ENCODE measurements at regions of chr14 and their contacts with region 1.

Region 1: DNA sequence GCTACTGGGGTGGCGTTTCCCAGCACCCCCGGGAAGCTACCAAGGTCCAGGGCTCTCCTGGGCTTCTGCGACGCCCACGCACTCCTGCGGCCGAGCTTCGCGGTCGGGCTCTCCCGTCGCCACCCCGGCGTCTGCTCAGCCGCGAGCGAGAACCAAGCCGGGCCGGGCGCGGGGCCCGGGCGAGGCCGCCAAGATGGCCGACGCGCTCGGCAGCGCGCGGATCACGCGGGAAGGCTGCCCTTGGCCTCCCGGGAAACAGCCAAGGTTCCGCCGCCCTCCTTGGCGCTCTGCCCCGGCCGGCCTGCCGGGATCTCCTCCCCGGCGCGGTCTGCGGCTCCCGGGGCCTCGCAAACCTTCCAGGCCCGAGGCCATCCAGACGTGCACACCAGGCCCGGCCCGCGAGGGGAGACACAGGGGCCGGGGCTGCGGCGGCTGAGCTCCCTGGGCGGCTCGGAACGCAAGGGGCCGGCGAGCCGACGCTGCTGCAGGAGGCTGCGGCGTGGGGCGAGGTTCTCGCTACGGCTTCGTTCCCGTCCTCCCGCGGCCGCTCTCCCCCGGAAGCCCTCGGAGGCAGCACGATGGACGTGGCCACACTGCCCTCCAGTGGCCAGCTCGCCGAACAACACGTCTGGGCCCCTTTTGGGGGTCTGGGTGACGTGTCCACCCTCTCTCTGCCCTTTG is 23.5 kb upstream of the ZFP36L1 start:
- DNase-seq: peak; percentile 96
- ATAC-seq: peak; percentile 74
- H3K4me3 Mint-ChIP-seq: peak overlapping the region; percentile 89
- H3K27ac Mint-ChIP-seq: peak overlapping the region; percentile 93
- H3K4me1 Mint-ChIP-seq: peaks cover 86% of the 10 kb centered on the region
- H3K27me3 Mint-ChIP-seq: no peaks in the 10 kb centered on the region
- CTCF ChIP-seq: peak; percentile 54

Region 2: GRCh38 chr14:68239988-68240771 is 576.2 kb before region 1 on chr14:
- CTCF ChIA-PET with region 1: interaction called, 15 read pairs
- POLR2A ChIA-PET with region 1: interaction called, 3 read pairs
- intact Hi-C with region 1: no loop called
- DNase-seq: no peak
- ATAC-seq: no peak
- H3K4me3 Mint-ChIP-seq: no peak overlapping the region
- H3K27ac Mint-ChIP-seq: no peak overlapping the region
- H3K4me1 Mint-ChIP-seq: peaks cover 8% of the 10 kb centered on the region
- H3K27me3 Mint-ChIP-seq: no peaks in the 10 kb centered on the region
- CTCF ChIP-seq: no peak

Region 3: DNA sequence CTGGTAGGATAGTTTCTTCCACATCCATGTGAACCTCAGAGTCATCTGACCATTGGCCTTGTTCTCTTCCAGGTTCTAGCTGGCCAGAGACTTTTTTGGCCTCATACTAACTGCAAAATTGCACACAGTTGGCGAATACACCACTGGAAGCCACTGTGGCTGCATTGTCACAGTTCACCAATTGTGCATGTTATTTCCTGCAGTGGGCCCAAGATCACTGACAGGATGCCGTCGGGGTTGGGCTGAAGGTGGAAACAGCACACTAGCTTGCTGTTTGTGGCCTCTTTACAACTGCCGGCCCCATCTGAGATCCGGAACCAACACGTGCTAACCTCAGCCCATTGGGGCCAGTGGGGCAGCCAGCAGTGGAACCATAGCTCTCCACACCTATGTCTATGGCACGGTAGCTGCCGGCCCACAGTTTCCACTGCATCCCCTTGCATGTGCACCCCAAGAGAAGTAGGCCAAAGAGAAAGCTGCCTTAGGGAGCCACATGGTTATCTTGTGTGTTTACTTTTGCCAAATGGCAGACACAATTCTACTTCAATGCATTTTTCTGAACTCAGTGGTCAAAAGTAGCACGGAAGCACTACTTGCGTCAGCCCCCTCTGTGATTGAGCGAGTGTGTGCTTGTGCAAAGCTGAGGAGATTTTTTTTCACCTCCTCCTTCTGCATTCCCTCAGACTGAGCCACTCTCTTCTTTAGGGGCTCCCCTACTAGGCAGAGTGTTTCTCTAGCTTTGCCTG is 532.9 kb before region 1 on chr14:
- CTCF ChIA-PET with region 1: interaction called, 8 read pairs
- POLR2A ChIA-PET with region 1: interaction called, 186 read pairs
- intact Hi-C with region 1: loop called (anchors 1 kb)
- DNase-seq: peak; percentile 61
- ATAC-seq: peak; percentile 60
- H3K4me3 Mint-ChIP-seq: peak overlapping the region; percentile 58
- H3K27ac Mint-ChIP-seq: peak overlapping the region; percentile 99
- H3K4me1 Mint-ChIP-seq: peaks cover 97% of the 10 kb centered on the region
- H3K27me3 Mint-ChIP-seq: no peaks in the 10 kb centered on the region
- CTCF ChIP-seq: no peak

Region 4: GRCh38 chr14:68401855-68402254 is 414.5 kb before region 1 on chr14:
- CTCF ChIA-PET with region 1: interaction called, 6 read pairs
- POLR2A ChIA-PET with region 1: interaction called, 139 read pairs
- intact Hi-C with region 1: loop called (anchors 1 kb)
- DNase-seq: no peak
- ATAC-seq: peak; percentile 59
- H3K4me3 Mint-ChIP-seq: peak overlapping the region; percentile 72
- H3K27ac Mint-ChIP-seq: peak overlapping the region; percentile 92
- H3K4me1 Mint-ChIP-seq: peaks cover 92% of the 10 kb centered on the region
- H3K27me3 Mint-ChIP-seq: no peaks in the 10 kb centered on the region
- CTCF ChIP-seq: no peak

Region 5: DNA sequence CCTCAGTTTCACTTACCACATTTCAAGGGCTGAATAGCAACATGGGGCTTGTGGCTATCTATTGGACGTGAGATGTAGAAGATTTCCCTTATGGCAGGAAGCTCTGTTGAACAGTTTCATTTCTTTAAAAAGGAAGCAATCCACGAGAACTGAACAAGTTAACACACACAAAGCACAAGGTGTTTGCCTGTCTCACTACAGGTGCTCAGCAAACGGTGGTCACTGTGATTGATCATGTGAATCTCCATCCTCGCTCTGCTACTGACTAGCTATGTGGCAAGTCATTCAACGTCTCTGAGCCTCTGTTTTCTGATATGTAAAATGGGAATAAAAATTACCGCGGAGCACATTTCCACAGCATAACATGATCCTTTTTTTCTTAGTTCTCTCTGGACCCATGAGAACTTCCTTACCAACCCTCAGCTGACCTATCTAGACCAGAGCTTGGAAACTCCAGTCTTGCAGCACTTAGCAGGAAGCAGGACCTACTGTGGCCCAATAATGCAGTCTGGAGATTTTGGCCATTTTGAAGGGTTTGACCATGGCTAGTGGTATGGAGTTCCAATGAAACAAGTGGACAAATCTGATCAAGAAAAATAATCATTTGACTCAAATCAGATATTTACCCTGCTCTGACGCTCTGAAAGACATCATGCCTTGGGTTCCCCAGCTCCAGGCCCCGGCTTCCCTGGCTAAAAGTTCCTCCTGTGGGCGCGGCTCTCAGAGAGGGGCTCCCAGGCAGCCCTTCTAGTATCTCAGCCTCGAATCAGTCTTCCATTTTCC is 302.4 kb before region 1 on chr14:
- CTCF ChIA-PET with region 1: interaction called, 3 read pairs
- POLR2A ChIA-PET with region 1: interaction called, 34 read pairs
- intact Hi-C with region 1: no loop called
- DNase-seq: no peak
- ATAC-seq: peak; percentile 84
- H3K4me3 Mint-ChIP-seq: peak overlapping the region; percentile 64
- H3K27ac Mint-ChIP-seq: peak overlapping the region; percentile 94
- H3K4me1 Mint-ChIP-seq: peaks cover 66% of the 10 kb centered on the region
- H3K27me3 Mint-ChIP-seq: no peaks in the 10 kb centered on the region
- CTCF ChIP-seq: no peak

Region 6: DNA sequence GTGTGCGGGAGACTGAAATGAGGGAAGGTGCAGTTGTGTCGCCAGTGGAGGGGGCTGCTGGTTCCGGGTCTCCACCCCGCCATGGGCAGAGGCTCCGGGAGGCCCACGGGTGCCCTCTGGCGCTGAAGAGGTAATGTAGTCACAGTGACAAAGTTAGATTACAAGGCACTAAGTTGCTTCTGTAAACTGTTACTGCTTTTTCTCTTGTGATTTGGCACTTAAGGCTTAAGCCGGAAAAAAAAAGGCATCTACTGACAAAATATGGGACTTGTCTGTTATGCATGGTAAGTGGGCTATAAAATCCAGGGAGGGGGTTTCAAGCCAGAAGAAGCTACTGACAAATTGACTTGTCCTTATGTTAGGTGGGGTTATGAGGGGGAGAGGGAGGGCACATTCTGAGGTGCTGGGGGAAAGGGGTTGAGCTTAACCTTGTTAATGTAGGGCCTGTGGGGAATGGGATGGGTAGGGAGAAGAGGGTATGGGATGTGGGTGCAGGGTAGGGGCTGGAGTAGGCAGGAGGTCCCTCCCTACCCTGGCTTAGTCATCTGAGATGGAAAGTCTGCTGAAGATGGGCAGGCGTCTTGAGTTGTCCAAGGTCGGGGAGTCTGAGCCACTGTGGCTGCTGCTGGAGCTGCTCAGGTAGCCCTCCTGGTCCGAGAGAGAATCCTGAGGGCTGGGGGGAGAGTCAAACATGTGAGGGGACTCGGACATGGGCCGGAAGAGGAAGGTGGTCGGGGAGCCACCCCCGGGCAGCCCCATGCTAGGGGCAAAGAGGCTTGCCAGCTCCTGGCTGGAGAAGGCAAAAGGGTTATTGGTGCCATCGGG is 27.2 kb before region 1 on chr14:
- CTCF ChIA-PET with region 1: interaction called, 121 read pairs
- POLR2A ChIA-PET with region 1: interaction called, 2,953 read pairs
- intact Hi-C with region 1: loop called (anchors 1 kb)
- DNase-seq: peak; percentile 62
- ATAC-seq: no peak
- H3K4me3 Mint-ChIP-seq: peak overlapping the region; percentile 100
- H3K27ac Mint-ChIP-seq: peak overlapping the region; percentile 99
- H3K4me1 Mint-ChIP-seq: peaks cover 54% of the 10 kb centered on the region
- H3K27me3 Mint-ChIP-seq: no peaks in the 10 kb centered on the region
- CTCF ChIP-seq: no peak